H1 (cell line): ENCODE measurements at regions of chr17 and their contacts with region 1.

Region 1: GRCh38 chr17:4394208-4395110 is 28.0 kb upstream of the UBE2G1 start:
- DNase-seq: no peak
- H3K4me3 ChIP-seq: no peak overlapping the region
- H3K27ac ChIP-seq: peak overlapping the region; percentile 99; the same call in 1 of the 2 replicates
- H3K4me1 ChIP-seq: peaks cover 3 to 19% (median 15%) of the 10 kb centered on the region in 4 experiments
- H3K27me3 ChIP-seq: no peaks in the 10 kb centered on the region; a peak in 1 of 7 replicates
- CTCF ChIP-seq: no peak
- EP300 ChIP-seq: no peak
- POLR2A ChIP-seq: no peak; a peak in 1 of 3 replicates
- RAD21 ChIP-seq: no peak

Region 2: DNA sequence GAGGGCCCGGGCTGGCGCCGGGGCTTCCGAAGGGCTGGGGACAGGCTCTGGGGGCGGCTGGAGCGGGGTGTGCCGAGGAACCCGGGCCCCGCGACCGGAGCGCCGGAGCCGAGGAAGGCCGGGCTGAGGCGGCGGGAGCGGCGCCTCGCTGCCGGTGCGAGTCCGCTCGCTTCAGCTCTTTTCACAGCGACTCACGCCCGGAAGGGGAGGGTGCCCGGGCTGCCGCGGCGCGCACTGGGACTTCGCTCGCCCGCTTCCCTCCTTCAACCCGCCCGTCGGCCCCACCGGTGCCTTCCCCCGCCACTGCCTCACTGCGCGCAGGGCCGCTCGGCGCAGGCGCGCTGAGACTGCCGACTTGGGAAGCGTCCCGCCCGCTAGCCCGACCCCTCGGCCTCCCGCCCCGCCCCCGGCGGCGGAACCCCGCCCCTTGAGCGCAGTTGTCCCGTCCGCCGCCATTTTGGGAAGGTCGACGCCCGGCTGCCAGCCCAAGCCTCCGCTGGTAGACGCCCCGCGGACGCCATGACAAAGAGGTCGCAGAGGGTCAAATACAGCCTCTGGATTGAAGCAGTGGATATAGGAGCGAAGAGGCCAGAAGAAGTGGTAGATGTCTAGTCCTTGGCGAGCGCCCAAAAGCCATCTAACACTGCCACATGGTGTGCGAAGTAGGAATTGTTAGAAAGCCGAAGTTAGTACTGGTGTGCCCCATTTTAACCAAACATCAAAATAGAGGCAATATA is 28.0 kb before region 1 on chr17 and contains the start of gene UBE2G1:
- CTCF ChIA-PET with region 1: interaction called, 4 read pairs
- POLR2A ChIA-PET with region 1: interaction called, 45 read pairs
- DNase-seq: peak; percentile 96 to 99
- H3K4me3 ChIP-seq: peak within 1 kb of the TSS; percentile 77 to 98 (median 82)
- H3K27ac ChIP-seq: peak within 1 kb of the TSS; percentile 85
- H3K4me1 ChIP-seq: peaks cover 0 to 5% (median 2%) of the 10 kb centered on the region in 4 experiments; a peak in 2 of 7 replicates
- H3K27me3 ChIP-seq: no peaks in the 10 kb centered on the region
- CTCF ChIP-seq: peak; percentile 23 to 68 (median 60)
- EP300 ChIP-seq: peak in 1 of 2 experiments; percentile 34; a peak in 1 of 3 replicates
- POLR2A ChIP-seq: peak; percentile 89 to 92
- RAD21 ChIP-seq: peak; percentile 82 to 89
- total RNA-seq, gene UBE2G1: 168 and 170 TPM in 2 replicates

Region 3: GRCh38 chr17:4381690-4382671 is 12.5 kb before region 1 on chr17:
- CTCF ChIA-PET with region 1: interaction called, 13 read pairs
- POLR2A ChIA-PET with region 1: interaction called, 22 read pairs
- DNase-seq: no peak
- H3K4me3 ChIP-seq: no peak overlapping the region
- H3K27ac ChIP-seq: no peak overlapping the region
- H3K4me1 ChIP-seq: peaks cover 0 to 7% (median 3%) of the 10 kb centered on the region in 4 experiments; a peak in 3 of 7 replicates
- H3K27me3 ChIP-seq: no peaks in the 10 kb centered on the region
- CTCF ChIP-seq: no peak
- EP300 ChIP-seq: no peak
- POLR2A ChIP-seq: no peak
- RAD21 ChIP-seq: no peak

Region 4: GRCh38 chr17:4407851-4408250 is 13.4 kb after region 1 on chr17:
- CTCF ChIA-PET with region 1: interaction called, 7 read pairs
- POLR2A ChIA-PET with region 1: interaction called, 26 read pairs
- DNase-seq: no peak
- H3K4me3 ChIP-seq: no peak overlapping the region
- H3K27ac ChIP-seq: no peak overlapping the region
- H3K4me1 ChIP-seq: peaks cover 0 to 5% (median 2%) of the 10 kb centered on the region in 4 experiments; a peak in 4 of 7 replicates
- H3K27me3 ChIP-seq: no peaks in the 10 kb centered on the region
- CTCF ChIP-seq: no peak
- EP300 ChIP-seq: no peak
- POLR2A ChIP-seq: no peak
- RAD21 ChIP-seq: no peak